BJ (cell line): ENCODE measurements at regions of chr13 and their contacts with region 1.

Region 1: DNA sequence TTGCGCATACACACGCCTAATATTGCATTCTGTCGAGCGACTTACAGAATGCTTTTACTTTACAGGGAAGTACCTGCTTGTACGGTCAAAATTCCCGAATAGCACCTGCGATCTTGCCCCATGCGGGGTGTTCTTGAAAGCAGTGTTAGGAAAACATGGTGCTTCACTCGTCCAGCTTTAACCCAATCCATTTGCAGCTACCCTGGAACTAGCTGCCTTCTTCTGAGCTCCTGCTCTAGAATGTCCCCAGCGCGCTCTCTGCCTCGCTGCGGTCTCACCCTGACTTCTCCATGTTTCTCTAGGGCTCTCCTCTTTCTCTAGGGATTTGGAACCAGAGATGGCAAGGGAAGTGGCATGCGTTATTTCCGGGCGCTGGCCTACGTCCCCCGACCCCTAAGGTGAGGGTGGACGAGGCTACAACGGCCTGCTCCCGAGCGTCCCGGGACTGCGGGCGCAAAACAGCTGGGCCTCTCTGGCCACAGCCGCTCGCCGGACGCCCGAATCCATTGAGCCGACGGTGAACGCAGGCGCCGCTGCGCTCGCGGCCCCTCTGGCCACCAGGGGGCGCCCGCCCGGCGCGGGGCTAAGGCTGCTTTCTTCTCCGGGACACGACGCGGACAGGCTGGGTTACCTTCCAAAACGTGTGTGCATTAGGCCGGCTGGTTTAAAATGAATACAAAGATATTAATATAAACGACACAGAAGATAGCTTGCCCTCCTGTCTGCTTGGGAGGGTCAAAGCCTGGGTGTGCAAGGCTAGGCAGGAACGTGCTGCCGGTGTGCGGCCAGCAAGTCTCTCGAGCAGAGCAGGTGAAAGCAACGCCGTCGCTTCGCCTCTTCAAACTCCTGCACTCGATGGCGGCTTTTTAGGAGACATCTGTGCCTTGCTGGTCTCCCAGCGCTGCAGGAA is 1.8 kb upstream of the SPRY2 start:
- DNase-seq: no peak
- H3K4me3 ChIP-seq: peak overlapping the region; percentile 86
- H3K27me3 ChIP-seq: no peaks in the 10 kb centered on the region
- CTCF ChIP-seq: peak; percentile 75

Region 2: GRCh38 chr13:79679334-79679733 is 663.4 kb before region 1 on chr13:
- CTCF ChIA-PET with region 1: interaction called, 23 read pairs
- POLR2A ChIA-PET with region 1: no interaction called
- DNase-seq: no peak
- H3K4me3 ChIP-seq: no peak overlapping the region
- H3K27me3 ChIP-seq: no peaks in the 10 kb centered on the region
- CTCF ChIP-seq: peak; percentile 79

Region 3: GRCh38 chr13:79775830-79776229 is 566.9 kb before region 1 on chr13:
- CTCF ChIA-PET with region 1: interaction called, 13 read pairs
- POLR2A ChIA-PET with region 1: interaction called, 4 read pairs
- DNase-seq: no peak
- H3K4me3 ChIP-seq: no peak overlapping the region
- H3K27me3 ChIP-seq: no peaks in the 10 kb centered on the region
- CTCF ChIP-seq: peak; percentile 73

Region 4: GRCh38 chr13:79988573-79988972 is 354.2 kb before region 1 on chr13:
- CTCF ChIA-PET with region 1: interaction called, 12 read pairs
- POLR2A ChIA-PET with region 1: no interaction called
- DNase-seq: peak; percentile 84
- H3K4me3 ChIP-seq: no peak overlapping the region
- H3K27me3 ChIP-seq: no peaks in the 10 kb centered on the region
- CTCF ChIP-seq: no peak

Region 5: GRCh38 chr13:80363890-80364503 is 21.3 kb after region 1 on chr13:
- CTCF ChIA-PET with region 1: interaction called, 13 read pairs
- POLR2A ChIA-PET with region 1: no interaction called
- DNase-seq: no peak
- H3K4me3 ChIP-seq: no peak overlapping the region
- H3K27me3 ChIP-seq: no peaks in the 10 kb centered on the region
- CTCF ChIP-seq: peak; percentile 76